T-cell (primary cell): ENCODE measurements at regions of chr13 and their contacts with region 1.

Region 1: GRCh38 chr13:46181840-46182490 is at the start of gene LCP1:
- DNase-seq: peak; percentile 41 to 92 (median 80)
- ATAC-seq: peak; percentile 74 to 82 (median 78)
- H3K4me3 ChIP-seq: peak within 1 kb of the TSS; percentile 78 to 99
- H3K4me3 Mint-ChIP-seq: peak within 1 kb of the TSS; percentile 90 to 99 (median 94)
- H3K27ac ChIP-seq: peak within 1 kb of the TSS; percentile 83
- H3K27ac Mint-ChIP-seq: peak within 1 kb of the TSS; percentile 86 to 93
- H3K4me1 ChIP-seq: peaks cover 40 to 49% of the 10 kb centered on the region in 2 experiments
- H3K4me1 Mint-ChIP-seq: peaks cover 59 to 70% (median 65%) of the 10 kb centered on the region in 3 donors
- H3K27me3 ChIP-seq: no peaks in the 10 kb centered on the region
- H3K27me3 Mint-ChIP-seq: no peaks in the 10 kb centered on the region
- total RNA-seq, gene LCP1: 338 to 574 (median 413) TPM

Region 2: GRCh38 chr13:46168341-46168740 is 13.6 kb before region 1 on chr13:
- CTCF ChIA-PET with region 1: interaction called, 3 to 17 read pairs
- POLR2A ChIA-PET with region 1: interaction called, 9 to 26 read pairs
- DNase-seq: peak in 17 of 35 experiments; percentile 24 to 80 (median 35)
- ATAC-seq: peak in 3 of 4 experiments; percentile 5 to 58 (median 11)
- H3K4me3 ChIP-seq: peak overlapping the region; percentile 11 to 24
- H3K4me3 Mint-ChIP-seq: peak overlapping the region; percentile 59 to 90 (median 64)
- H3K27ac ChIP-seq: peak overlapping the region; percentile 83
- H3K27ac Mint-ChIP-seq: peak overlapping the region; percentile 85 to 93
- H3K4me1 ChIP-seq: peaks cover 76 to 79% of the 10 kb centered on the region in 2 experiments
- H3K4me1 Mint-ChIP-seq: peaks cover 94 to 96% (median 95%) of the 10 kb centered on the region in 3 donors
- H3K27me3 ChIP-seq: no peaks in the 10 kb centered on the region
- H3K27me3 Mint-ChIP-seq: no peaks in the 10 kb centered on the region

Region 3: GRCh38 chr13:46211483-46212351 is 29.8 kb after region 1 on chr13 and contains the start of gene LRRC63:
- CTCF ChIA-PET with region 1: interaction called in 1 of 2 experiments, 8 read pairs
- POLR2A ChIA-PET with region 1: interaction called in 1 of 2 experiments, 10 read pairs
- DNase-seq: peak; percentile 63 to 87 (median 77)
- ATAC-seq: peak; percentile 91 to 100 (median 99)
- H3K4me3 ChIP-seq: peak within 1 kb of the TSS; percentile 65 to 76
- H3K4me3 Mint-ChIP-seq: peak within 1 kb of the TSS; percentile 89 to 96 (median 93)
- H3K27ac ChIP-seq: peak within 1 kb of the TSS; percentile 86
- H3K27ac Mint-ChIP-seq: peak within 1 kb of the TSS; percentile 93 to 96
- H3K4me1 ChIP-seq: peaks cover 5 to 7% of the 10 kb centered on the region in 2 experiments
- H3K4me1 Mint-ChIP-seq: peaks cover 24 to 31% (median 26%) of the 10 kb centered on the region in 3 donors
- H3K27me3 ChIP-seq: no peaks in the 10 kb centered on the region
- H3K27me3 Mint-ChIP-seq: no peaks in the 10 kb centered on the region
- total RNA-seq, gene LRRC63: 0.43 to 0.82 (median 0.54) TPM